Head of caudate nucleus (tissue), 42 donors: ENCODE measurements at regions of chr6 and their contacts with region 1.

Region 1: GRCh38 chr6:26607434-26608230 is 10.9 kb downstream of the ABT1 start:
- DNase-seq: peak in 31 of 42 donors; percentile 18 to 80 (median 55)

Region 2: DNA sequence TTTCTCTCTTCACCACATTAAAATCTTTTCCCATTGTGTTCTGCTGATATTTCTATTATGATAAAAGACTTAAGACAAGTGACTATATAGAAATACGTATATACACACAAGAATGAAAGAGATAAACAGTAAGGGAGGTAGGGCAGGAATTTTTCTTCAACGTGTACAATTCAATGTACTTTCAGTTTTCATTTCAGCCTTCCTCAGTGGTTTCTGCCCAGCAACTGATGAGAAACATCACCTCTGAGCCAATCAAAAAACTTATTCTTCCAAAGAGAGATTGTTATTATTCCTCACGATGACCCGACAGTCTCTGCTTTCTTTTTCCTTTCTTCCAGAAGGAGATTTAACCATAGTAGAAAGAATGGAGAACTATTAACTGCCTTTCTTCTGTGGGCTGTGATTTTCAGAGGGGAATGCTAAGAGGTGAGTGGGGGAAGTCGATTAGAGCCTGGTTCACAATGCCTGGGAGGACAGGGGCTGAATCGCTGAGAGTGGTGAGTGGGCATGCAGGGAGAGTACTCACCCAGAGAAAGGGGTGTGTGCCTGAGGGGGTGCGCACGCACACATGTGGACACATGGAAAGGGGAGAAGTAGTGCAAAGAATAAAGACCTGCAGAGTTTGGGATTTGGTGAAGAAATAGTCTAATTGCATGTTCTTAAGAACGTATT is 205.5 kb before region 1 on chr6 and contains the start of gene BTN3A1:
- intact Hi-C with region 1: no loop called
- DNase-seq: peak; percentile 11 to 79 (median 52)

Region 3: GRCh38 chr6:27049863-27050781 is 442.5 kb after region 1 on chr6:
- intact Hi-C with region 1: no loop called
- DNase-seq: no peak

Region 4: GRCh38 chr6:27078734-27079357 is 471.2 kb after region 1 on chr6:
- intact Hi-C with region 1: loop called (anchors 2 kb)
- DNase-seq: peak in 32 of 42 donors; percentile 12 to 87 (median 58)

Region 5: DNA sequence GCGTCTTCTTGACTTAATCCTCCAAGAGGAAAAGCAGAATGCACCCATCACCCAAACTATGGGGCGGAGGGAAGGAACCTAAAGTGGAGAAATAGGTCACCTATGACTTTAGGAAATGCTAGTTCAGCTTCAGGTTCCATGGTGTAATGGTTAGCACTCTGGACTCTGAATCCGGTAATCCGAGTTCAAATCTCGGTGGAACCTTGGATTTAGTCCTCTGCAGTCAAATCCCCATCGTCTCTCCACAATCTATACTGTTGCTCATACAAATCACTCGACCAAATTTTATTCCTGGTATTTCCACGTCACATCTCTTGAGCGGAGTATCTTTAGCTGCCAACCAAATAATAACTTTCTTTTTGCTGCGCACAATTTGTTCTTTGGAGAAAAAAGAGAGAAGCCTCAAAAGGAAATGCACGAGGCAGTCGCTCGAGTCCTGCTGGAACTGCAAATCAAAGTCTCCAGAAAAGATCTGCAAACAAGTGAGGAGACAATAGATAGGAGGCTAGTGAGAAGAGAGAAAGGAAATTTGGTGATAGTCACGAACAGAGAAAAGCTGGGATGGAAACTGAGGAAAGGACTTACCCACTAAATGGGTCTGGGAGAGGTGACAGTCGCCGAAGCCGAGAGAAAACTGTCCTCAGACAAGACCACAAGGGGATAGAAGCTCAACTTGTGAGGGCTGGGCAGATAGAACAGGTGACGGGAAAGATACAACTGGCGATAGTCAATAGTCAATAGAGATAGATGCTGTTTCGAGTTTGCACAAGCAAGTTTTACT is 687.9 kb after region 1 on chr6:
- intact Hi-C with region 1: no loop called
- DNase-seq: no peak